Heart left ventricle (tissue), 16 donors: ENCODE measurements at regions of chr7 and their contacts with region 1.

Region 1: DNA sequence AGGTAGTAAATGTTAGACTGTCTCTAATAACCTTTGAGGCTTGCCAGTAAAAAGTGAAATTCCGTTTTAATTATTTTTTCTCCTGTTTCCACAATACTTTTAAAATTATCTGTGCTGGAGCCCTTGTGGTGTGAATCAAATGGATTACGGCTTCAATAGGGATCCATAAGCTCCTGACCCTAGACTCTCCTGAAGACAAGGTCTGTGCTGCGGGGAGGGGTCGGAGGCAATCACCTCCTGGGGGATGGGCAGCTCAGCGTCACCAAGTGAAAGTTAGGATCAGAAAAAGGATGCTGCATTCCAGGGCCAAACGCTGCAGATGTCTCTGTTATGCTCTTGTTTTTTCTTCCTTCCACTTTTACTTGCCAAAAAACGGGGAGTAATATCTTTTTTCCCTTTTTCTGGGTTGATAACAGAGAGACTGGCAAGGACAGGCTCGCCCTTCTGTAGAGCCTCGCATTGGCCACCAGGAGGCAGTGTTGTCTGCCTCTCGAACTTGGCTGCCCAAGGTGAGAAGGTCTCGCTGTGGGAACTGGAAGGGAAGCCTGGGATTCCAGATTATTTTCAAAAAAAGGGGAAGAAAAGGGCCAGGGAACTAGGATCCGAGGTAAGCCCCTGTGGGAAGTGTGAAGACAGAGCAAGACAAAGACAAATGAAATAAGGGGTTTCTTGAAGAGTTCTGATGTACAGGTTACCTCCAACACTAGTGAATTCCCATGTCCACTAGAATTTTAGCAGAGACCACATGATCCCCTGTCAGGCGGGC is 621.9 kb downstream of the ACTR3B start:
- DNase-seq: peak in 1 of 5 donors; percentile 31
- ATAC-seq: peak in 3 of 4 donors; percentile 58 to 75 (median 62)
- H3K4me3 ChIP-seq: no peak overlapping the region
- H3K27ac ChIP-seq: peak overlapping the region in 1 of 12 donors; percentile 69
- H3K4me1 ChIP-seq: no peaks in the 10 kb centered on the region
- H3K27me3 ChIP-seq: peaks cover 0 to 6% (median 0%) of the 10 kb centered on the region in 9 donors
- CTCF ChIP-seq: peak; percentile 40 to 74 (median 64)
- POLR2A ChIP-seq: no peak

Region 2: DNA sequence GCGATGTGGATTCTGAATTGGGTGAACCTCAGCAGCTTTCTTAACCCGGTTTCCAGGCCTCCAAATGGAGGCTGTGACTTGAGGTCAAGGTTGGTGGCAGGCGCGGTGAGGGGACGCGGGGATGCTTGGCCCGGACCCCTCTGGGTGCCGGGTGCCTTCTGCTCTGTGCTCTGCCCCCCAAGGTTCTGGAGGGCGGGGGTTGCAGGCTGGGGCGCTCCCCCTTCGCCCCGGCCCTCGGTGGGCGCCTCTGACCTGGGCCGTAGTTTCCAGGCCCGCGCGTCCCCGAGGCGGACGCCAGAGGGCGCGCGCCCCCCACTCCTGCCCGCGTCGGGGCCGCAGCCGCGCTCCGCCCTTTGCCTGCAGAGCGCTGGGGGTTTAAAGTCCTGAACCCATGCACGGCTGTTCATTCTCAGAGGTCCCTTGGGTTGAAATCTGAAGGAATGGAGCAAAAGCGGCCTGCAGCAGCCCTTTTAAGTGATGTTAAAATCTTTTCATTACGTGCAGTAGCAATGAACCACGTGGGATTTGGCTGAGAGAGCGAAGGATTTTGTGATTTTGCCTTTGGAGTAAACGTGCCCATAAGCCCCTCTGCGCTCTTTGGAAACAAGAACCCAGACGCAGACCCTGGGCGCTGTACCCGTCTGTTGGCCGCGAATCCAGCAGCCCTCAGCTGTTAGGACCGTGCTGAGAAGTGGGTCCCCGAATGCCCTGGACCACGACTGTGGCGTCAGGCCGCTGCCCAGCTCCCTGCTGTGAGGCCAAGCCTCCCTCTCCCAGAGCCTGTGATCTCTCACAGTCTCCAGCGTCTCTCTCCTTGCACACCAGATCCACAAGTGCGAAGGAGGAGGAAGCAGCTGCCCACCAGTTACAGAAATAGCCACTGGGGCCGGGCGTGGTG is 486.9 kb before region 1 on chr7:
- intact Hi-C with region 1: loop called in 1 of 10 experiments (anchors 10 kb)
- DNase-seq: no peak
- ATAC-seq: peak in 2 of 4 donors; percentile 57 to 70
- H3K4me3 ChIP-seq: no peak overlapping the region
- H3K27ac ChIP-seq: no peak overlapping the region
- H3K4me1 ChIP-seq: peaks cover 0 to 7% (median 0%) of the 10 kb centered on the region in 12 donors
- H3K27me3 ChIP-seq: peaks cover 0 to 18% (median 0%) of the 10 kb centered on the region in 9 donors
- CTCF ChIP-seq: peak; percentile 62 to 86 (median 72)
- POLR2A ChIP-seq: no peak

Region 3: GRCh38 chr7:153682628-153683027 is 301.2 kb after region 1 on chr7:
- intact Hi-C with region 1: loop called in 1 of 10 experiments (anchors 2 kb)
- DNase-seq: no peak
- ATAC-seq: no peak
- H3K4me3 ChIP-seq: no peak overlapping the region
- H3K27ac ChIP-seq: no peak overlapping the region
- H3K4me1 ChIP-seq: no peaks in the 10 kb centered on the region
- H3K27me3 ChIP-seq: no peaks in the 10 kb centered on the region
- CTCF ChIP-seq: no peak
- POLR2A ChIP-seq: no peak

Region 4: DNA sequence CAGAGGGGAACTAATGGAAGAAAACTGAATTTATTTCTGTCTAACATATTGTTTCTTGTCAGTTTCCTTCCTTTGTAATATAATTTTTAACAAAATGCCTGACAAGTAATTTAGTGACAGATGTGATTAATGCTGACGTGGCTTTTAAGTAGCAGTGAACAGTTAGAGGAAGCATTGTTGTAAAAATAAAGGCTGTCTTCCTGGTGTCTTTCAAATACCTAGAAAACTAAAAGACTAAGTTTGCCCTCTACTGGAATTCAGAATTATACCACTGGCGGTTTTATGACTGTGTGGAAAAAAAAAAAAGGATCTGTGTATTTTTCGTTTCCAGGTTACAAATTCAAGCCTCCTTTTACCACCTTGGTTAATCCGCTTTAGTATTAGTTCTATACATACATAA is 453.6 kb after region 1 on chr7:
- intact Hi-C with region 1: loop called in 4 of 10 experiments (anchors 10 kb)
- DNase-seq: no peak
- ATAC-seq: no peak
- H3K4me3 ChIP-seq: no peak overlapping the region
- H3K27ac ChIP-seq: no peak overlapping the region
- H3K4me1 ChIP-seq: no peaks in the 10 kb centered on the region
- H3K27me3 ChIP-seq: no peaks in the 10 kb centered on the region
- CTCF ChIP-seq: peak in 1 of 12 donors; percentile 7
- POLR2A ChIP-seq: no peak